Activated T-helper 2 cell treated with anti-CD3 and anti-CD28 coated beads, Interferon-gamma antibody, Interleukin-2, Interleukin-4, amounts not matched to agents 10 μg/mL and 5 μg/mL and 100 μg/mL, durations not matched to agents 14 hours and 24 hours and 36 hours (primary cell): ENCODE measurements at regions of chr1 and their contacts with region 1.

Region 1: GRCh38 chr1:211680752-211681327 is 5.4 kb upstream of the NEK2 start:
- DNase-seq: peak; percentile 65
- H3K4me3 Mint-ChIP-seq: no peak overlapping the region
- H3K27ac Mint-ChIP-seq: peak overlapping the region; percentile 75
- H3K4me1 Mint-ChIP-seq: peaks cover 10% of the 10 kb centered on the region
- H3K27me3 Mint-ChIP-seq: peaks cover 2% of the 10 kb centered on the region

Region 2: DNA sequence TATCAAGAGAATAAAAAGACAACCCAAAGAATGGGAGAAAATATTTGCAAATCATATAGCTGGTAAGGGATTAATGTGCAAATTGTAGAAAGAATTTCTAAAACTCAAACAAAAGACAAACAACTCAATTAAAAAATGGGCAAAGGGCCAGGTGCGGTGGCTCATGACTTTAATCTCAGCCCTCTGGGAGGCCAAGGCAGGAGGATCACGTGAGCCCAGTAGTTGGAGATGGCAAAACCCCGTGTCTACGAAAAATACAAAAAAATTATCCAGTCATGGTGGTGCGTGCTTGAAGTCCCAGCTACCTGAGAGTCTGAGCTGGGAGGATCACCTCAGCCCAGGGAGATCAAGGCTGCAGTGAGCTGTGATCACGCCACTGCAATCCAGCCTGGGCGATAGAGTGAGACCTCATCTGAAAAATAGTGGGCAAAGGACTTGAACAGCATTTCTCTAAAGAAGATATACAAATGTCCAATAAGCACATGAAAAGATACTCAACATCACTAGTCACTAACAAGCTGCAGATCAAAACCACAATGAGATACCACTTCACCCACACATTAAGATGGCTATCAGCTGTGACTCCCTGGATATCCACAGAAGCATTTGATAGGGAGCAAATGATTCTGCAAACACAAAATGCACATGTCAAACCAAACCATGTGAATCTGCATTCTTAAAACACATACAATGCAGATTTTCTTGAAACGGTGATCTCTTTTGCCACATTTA is 122.8 kb before region 1 on chr1:
- intact Hi-C with region 1: no loop called
- DNase-seq: no peak
- H3K4me3 Mint-ChIP-seq: no peak overlapping the region
- H3K27ac Mint-ChIP-seq: no peak overlapping the region
- H3K4me1 Mint-ChIP-seq: peaks cover 12% of the 10 kb centered on the region
- H3K27me3 Mint-ChIP-seq: peaks cover 14% of the 10 kb centered on the region

Region 3: DNA sequence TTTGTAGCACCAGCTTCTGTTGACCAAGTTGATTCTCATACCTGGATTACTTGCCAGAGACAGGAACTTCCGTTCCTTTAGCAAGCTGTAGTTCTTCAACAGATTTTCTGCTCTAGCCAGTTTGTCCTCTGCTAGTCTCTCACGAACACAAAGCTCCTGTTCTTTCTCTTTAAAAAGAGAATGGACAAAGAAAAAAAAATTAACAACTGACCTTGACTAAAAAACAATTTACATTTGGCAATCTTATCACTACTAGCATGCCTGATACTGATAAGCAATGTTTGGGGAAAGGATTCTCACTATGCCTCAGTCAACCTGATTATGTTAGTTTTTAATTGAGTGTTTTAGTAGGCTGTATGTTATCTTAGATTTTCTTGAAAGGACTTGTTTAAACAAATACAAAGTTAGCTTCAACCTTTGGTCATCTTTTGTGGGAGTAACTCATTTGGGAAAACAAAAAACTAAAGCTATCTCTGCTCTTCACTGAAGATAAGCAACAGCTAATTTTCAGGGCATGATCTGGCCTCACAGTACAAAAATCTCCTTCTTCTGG is 13.7 kb before region 1 on chr1:
- intact Hi-C with region 1: no loop called
- DNase-seq: no peak
- H3K4me3 Mint-ChIP-seq: no peak overlapping the region
- H3K27ac Mint-ChIP-seq: no peak overlapping the region
- H3K4me1 Mint-ChIP-seq: peaks cover 8% of the 10 kb centered on the region
- H3K27me3 Mint-ChIP-seq: no peaks in the 10 kb centered on the region

Region 4: GRCh38 chr1:211830330-211831142 is 149.7 kb after region 1 on chr1 and contains the start of gene LPGAT1:
- intact Hi-C with region 1: loop called (anchors 2 kb)
- DNase-seq: peak; percentile 67
- H3K4me3 Mint-ChIP-seq: peak within 1 kb of the TSS; percentile 92
- H3K27ac Mint-ChIP-seq: peak within 1 kb of the TSS; percentile 78
- H3K4me1 Mint-ChIP-seq: peaks cover 55% of the 10 kb centered on the region
- H3K27me3 Mint-ChIP-seq: peaks cover 6% of the 10 kb centered on the region
- total RNA-seq, gene LPGAT1: 27.8 and 31.1 TPM in 2 replicates

Region 5: GRCh38 chr1:211965108-211965805 is 284.4 kb after region 1 on chr1:
- intact Hi-C with region 1: no loop called
- DNase-seq: no peak
- H3K4me3 Mint-ChIP-seq: no peak overlapping the region
- H3K27ac Mint-ChIP-seq: no peak overlapping the region
- H3K4me1 Mint-ChIP-seq: no peaks in the 10 kb centered on the region
- H3K27me3 Mint-ChIP-seq: no peaks in the 10 kb centered on the region

Region 6: DNA sequence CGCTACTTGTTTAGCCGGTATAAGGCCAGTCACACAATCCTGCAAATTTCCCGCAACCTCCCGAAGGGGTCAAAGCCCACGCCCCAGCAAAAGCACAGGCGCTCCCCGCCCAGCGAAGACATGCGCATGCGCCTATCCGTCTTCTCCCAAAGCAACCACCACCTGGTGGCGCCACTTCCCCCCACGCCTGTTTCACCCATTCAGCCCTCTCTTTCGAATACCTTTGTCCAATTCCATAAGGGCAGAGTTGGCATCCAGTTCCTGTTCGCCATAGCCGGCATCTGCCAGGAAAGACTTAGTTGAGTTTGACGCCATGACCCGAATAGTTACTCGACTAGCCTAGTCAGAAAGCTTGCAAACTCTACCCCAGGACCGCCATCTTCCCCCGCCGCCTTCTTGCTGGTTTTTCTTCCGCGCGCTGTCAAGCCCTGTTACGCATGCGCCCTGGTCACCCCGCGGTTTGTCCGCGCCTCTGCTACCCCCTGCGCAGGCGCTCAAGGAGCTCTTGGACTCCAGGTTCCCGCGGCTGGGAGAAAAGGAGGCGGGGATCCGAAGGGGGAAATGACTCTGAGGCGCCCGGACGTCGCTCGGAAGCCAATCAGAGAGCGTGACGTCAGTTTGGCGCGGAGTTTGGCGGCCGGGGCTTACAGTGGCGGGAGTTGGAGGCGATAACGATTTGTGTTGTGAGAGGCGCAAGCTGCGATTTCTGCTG is 354.4 kb after region 1 on chr1 and contains the starts of genes DTL and INTS7:
- intact Hi-C with region 1: loop called (anchors 1 kb)
- DNase-seq: peak; percentile 99
- H3K4me3 Mint-ChIP-seq: peak within 1 kb of the TSS; percentile 95
- H3K27ac Mint-ChIP-seq: peak within 1 kb of the TSS; percentile 85
- H3K4me1 Mint-ChIP-seq: peaks cover 58% of the 10 kb centered on the region
- H3K27me3 Mint-ChIP-seq: no peaks in the 10 kb centered on the region
- total RNA-seq, gene DTL: 73.9 and 77.0 TPM in 2 replicates
- total RNA-seq, gene INTS7: 33.3 and 33.8 TPM in 2 replicates

Region 7: DNA sequence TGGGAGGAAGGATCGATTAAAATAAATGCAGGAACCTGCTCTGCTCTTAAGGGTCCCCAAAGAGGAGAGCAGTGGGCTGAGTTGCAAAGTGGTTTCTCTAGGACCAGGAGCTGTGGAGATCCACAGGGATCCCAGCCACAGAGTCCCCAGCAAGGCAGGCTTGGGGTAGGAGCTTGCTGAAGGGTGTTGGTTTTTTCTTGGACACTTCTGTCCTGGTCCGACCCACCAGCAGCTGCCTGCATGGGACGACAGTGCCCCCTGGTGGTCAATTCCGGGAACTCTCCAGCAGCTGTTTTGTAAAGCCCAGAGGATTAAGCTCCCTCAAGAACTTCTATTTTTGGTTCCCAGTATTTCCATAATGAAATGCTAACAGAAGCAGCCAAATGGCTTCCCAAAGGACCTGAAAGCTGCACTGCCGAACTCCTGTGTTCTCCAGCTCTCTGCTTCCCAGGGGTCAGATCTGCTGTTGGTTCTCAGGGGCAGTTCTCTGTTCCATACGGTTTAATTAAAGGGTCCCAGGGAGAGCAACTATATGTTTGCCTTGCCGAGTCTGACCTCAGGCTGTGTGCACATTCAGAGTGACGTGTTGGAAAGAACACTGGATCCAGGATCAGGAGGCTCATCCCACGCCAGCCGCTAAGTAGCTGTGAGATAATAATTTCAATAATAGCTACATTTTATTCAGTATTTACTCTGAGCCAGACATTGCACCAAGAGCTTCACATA is 775.1 kb after region 1 on chr1:
- intact Hi-C with region 1: loop called (anchors 1 kb)
- DNase-seq: peak; percentile 70
- H3K4me3 Mint-ChIP-seq: no peak overlapping the region
- H3K27ac Mint-ChIP-seq: no peak overlapping the region
- H3K4me1 Mint-ChIP-seq: peaks cover 6% of the 10 kb centered on the region
- H3K27me3 Mint-ChIP-seq: no peaks in the 10 kb centered on the region